GM12878 (cell line): ENCODE measurements at regions of chr4 and their contacts with region 1.

Region 1: DNA sequence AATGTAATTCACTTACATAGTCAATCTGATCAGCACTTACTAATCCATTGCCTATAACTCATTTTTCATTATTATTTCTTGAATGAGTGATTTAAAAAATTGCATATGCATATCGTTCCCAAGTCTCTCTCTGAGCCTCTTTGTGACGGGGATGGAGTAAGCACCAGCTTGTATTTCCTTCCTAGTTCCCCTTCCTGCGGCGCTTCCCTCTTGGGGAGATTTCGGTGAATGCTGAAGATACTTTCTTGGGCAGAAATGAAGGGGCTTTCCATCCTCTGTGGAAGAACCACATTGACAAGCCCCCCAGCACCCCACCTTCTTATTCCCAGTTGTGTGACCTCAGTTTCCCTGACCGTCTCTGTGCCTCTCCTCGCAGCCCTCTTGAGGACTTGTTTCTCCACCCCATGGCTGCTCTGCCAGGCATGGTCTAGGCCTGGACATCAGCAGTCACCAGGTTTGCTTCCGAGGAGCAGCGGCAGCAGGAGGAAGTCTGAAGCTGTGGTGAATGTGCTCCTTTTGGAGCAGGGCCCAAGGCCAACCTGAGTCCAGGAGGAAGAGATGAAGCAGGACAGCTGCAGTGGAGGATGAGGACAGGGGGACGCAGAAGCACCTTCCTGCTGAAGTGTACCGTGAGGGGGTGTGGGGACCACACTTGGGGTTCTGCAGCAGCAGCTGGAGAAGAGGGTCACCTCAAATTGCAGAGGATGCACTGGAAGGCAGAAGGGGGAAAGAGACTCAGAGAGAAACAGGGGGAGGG is 124.9 kb downstream of the IRF2 start:
- DNase-seq: no peak
- ATAC-seq: no peak
- H3K4me3 ChIP-seq: peak overlapping the region; percentile 89
- H3K27ac ChIP-seq: peak overlapping the region; percentile 99
- H3K4me1 ChIP-seq: peaks cover 50% of the 10 kb centered on the region
- H3K27me3 ChIP-seq: no peaks in the 10 kb centered on the region
- CTCF ChIP-seq: no peak
- EP300 ChIP-seq: no peak
- POLR2A ChIP-seq: no peak
- RAD21 ChIP-seq: no peak

Region 2: GRCh38 chr4:184021419-184021818 is 328.0 kb before region 1 on chr4:
- CTCF ChIA-PET with region 1: no interaction called
- POLR2A ChIA-PET with region 1: no interaction called
- RAD21 ChIA-PET with region 1: no interaction called
- SMC1A ChIA-PET with region 1: no interaction called
- in situ Hi-C with region 1: no loop called
- intact Hi-C with region 1: no loop called
- DNase-seq: no peak
- ATAC-seq: no peak
- H3K4me3 ChIP-seq: no peak overlapping the region
- H3K27ac ChIP-seq: no peak overlapping the region
- H3K4me1 ChIP-seq: no peaks in the 10 kb centered on the region
- H3K27me3 ChIP-seq: no peaks in the 10 kb centered on the region
- CTCF ChIP-seq: no peak
- EP300 ChIP-seq: no peak
- POLR2A ChIP-seq: no peak
- RAD21 ChIP-seq: no peak

Region 3: DNA sequence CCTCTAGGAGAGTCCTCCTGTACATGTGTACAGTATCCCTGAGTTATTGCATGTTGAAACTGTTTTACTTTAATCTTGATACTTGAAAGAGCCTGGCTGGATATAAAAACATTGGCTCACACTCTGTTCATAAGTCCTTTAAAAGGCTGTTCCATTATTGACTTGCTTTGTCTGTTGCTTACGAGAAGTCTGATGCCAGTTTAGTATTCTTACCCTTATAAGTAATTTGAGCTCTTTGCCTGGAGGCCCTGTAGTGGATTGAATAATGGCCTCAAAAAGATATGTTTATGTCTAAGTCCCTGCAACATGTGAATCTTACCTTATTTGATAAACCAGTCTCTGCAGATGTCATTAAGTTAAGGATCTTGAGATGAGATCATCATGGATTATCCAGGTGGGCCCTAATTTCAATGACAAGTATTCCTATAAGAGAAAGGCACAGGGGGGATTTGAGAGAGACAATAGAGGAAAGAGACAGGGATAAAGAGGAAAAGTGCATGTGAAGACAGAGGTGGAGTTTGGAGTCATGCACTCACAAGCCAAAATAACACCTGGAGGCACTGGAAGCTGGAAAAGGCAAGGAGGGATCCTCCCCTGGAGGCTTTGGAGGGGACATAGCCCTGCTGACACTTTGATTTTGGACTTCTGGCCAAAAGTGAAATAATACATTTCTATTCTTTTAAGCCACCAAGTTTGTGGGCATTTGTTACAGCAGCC is 26.8 kb after region 1 on chr4:
- CTCF ChIA-PET with region 1: interaction called, 3 read pairs
- POLR2A ChIA-PET with region 1: interaction called, 114 read pairs
- RAD21 ChIA-PET with region 1: interaction called, 92 read pairs
- SMC1A ChIA-PET with region 1: interaction called, 184 read pairs
- in situ Hi-C with region 1: no loop called
- intact Hi-C with region 1: no loop called
- DNase-seq: no peak
- ATAC-seq: no peak
- H3K4me3 ChIP-seq: no peak overlapping the region
- H3K27ac ChIP-seq: no peak overlapping the region
- H3K4me1 ChIP-seq: peaks cover 5% of the 10 kb centered on the region
- H3K27me3 ChIP-seq: no peaks in the 10 kb centered on the region
- CTCF ChIP-seq: no peak
- EP300 ChIP-seq: no peak
- POLR2A ChIP-seq: no peak
- RAD21 ChIP-seq: no peak